Mammary epithelial cell (primary cell): ENCODE measurements at regions of chr14 and their contacts with region 1.

Region 1: DNA sequence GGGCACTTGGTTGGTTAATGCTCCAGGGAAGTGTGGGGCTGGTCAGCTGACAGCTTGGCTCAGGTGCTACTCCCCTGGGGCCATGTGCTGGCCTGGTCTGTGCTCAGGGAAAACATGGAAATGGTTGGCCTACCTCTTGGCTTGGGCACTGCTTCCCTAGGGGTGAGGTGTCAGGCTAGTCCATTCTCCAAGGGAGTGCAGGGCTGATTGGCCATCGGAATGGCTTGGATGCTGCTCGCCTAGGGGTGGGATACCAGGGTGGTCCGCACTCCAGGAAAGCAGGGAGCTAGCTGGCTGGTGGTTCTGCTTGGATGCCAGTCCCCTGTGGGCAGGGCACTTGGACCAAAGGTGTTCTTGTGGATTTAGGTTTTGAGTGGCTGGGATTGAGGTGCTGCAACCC is 245.7 kb downstream of the RAD51B start:
- DNase-seq: no peak
- H3K4me3 ChIP-seq: no peak overlapping the region
- H3K27ac ChIP-seq: no peak overlapping the region
- H3K4me1 ChIP-seq: no peaks in the 10 kb centered on the region
- H3K27me3 ChIP-seq: no peaks in the 10 kb centered on the region
- CTCF ChIP-seq: no peak

Region 2: GRCh38 chr14:67987606-67988005 is 77.7 kb before region 1 on chr14:
- CTCF ChIA-PET with region 1: no interaction called
- dilution Hi-C with region 1: no loop called
- in situ Hi-C with region 1: no loop called
- intact Hi-C with region 1: no loop called
- DNase-seq: peak; percentile 61
- H3K4me3 ChIP-seq: no peak overlapping the region
- H3K27ac ChIP-seq: peak overlapping the region; percentile 2
- H3K4me1 ChIP-seq: peaks cover 5% of the 10 kb centered on the region
- H3K27me3 ChIP-seq: no peaks in the 10 kb centered on the region
- CTCF ChIP-seq: no peak

Region 3: GRCh38 chr14:68081489-68081888 is 16.2 kb after region 1 on chr14:
- CTCF ChIA-PET with region 1: interaction called, 40 read pairs
- dilution Hi-C with region 1: no loop called
- in situ Hi-C with region 1: no loop called
- intact Hi-C with region 1: no loop called
- DNase-seq: no peak
- H3K4me3 ChIP-seq: no peak overlapping the region
- H3K27ac ChIP-seq: no peak overlapping the region
- H3K4me1 ChIP-seq: peaks cover 3% of the 10 kb centered on the region
- H3K27me3 ChIP-seq: no peaks in the 10 kb centered on the region
- CTCF ChIP-seq: no peak